Panc1 (cell line): ENCODE measurements at regions of chr1 and their contacts with region 1.

Region 1: DNA sequence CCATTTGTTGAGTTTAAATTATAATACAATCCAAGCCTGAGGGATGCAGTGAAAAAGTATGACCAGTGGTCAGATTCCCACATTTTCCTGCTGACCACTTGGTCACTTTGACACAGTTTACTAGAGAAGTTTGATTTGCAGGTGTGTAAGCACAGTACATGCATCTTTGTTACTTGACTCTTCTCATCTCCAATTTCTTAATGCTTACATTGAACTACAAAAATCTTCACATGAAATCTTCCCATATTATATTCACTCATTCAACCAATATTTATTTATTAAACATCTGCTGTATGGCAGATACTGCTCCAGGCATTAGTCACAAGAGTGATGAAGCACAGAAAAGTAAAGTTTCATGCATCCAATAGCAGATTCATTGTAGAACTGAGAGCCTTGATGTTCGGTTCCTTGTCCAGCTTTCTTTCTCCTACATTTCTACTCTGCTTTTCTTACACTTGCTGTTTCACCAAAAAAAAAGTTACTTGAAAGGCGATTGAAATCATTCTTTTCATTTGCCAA is 211.7 kb downstream of the NFIA start:
- DNase-seq: no peak
- ATAC-seq: no peak
- H3K4me3 ChIP-seq: no peak overlapping the region
- H3K27ac ChIP-seq: no peak overlapping the region
- H3K4me1 ChIP-seq: peaks cover 2% of the 10 kb centered on the region; the same call in 1 of the 2 replicates
- H3K27me3 ChIP-seq: no peaks in the 10 kb centered on the region
- CTCF ChIP-seq: no peak

Region 2: DNA sequence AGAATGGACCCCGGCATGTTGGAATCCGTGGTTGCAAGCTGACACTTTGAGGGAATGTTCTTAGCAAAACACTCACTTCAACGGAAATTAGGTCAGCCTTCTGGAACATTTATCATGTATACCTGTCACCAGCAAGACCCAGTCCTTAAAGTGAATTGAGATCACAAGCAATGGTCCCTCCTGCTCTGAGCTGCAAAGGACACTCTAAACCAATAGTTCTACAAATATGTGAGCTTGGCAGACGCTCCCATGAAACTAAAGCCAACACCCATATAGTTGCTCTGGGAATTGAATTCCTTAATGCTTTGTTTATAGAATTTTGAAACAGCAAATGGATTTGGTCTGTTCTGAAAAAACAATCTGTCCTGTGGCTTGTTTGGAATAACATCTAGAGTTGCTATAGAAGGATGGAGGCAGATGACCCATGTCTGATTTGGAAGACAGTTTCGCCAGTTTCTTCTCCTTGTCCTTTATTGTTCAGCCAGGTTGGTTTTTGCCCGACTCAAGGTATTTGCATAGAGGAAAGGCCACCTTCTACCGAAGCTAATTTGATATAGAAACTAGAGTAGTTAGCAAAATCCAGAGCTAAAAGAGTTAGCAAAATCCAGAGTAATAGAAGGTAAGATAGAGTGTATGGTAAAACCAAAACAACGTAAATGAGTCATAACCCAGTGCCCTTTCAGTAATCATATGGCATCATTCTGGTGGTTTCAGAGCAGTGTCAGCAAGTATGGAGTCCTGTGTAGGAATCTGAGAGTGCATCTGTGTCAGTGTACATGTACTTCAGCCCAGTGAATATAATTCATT is 24.5 kb after region 1 on chr1:
- CTCF ChIA-PET with region 1: no interaction called
- POLR2A ChIA-PET with region 1: no interaction called
- in situ Hi-C with region 1: no loop called
- intact Hi-C with region 1: loop called (anchors 1 kb)
- DNase-seq: no peak
- ATAC-seq: no peak
- H3K4me3 ChIP-seq: no peak overlapping the region
- H3K27ac ChIP-seq: no peak overlapping the region
- H3K4me1 ChIP-seq: peaks cover 3% of the 10 kb centered on the region; the same call in 1 of the 2 replicates
- H3K27me3 ChIP-seq: no peaks in the 10 kb centered on the region
- CTCF ChIP-seq: no peak